B cell (primary cell): ENCODE measurements at regions of chr1 and their contacts with region 1.

Region 1: DNA sequence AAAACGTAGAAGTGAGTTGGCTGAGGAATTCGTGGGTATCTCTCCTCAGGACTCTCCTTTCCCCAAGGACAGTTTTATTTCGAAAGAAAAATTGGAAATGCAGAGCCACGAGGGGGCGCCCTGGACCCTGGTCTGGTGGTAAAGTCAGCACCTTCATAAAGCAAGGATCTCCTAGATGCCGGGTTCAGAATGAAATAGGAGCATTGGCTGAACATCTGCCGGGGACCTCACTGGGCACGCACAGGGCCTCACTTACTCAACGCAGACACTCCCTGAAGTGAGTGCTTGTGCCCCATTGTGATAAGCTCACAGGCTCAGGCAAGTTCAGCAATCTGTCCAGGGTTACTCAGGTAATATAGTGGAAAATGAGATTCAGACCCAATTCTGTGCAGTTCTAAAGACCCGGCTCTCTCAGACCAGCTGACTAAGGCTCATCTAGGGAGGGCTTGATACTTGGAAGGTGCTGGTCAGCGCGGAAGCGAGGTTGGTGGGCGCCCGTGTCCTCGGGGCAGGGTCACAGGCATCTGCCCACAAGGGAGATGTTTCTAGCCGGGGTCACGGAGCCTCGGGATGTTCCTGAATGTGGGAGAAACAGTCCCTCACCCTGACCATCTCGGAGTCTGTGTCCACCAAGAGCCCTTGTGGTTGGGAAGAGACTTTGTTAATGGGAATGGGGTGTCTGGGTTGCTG is 55.7 kb upstream of the ETV3 start:
- DNase-seq: peak; percentile 76
- ATAC-seq: no peak
- H3K4me3 ChIP-seq: no peak overlapping the region
- H3K4me3 Mint-ChIP-seq: no peak overlapping the region
- H3K27ac ChIP-seq: no peak overlapping the region
- H3K27ac Mint-ChIP-seq: no peak overlapping the region
- H3K4me1 ChIP-seq: peaks cover 3 to 4% of the 10 kb centered on the region in 2 donors
- H3K4me1 Mint-ChIP-seq: peaks cover 2% of the 10 kb centered on the region
- H3K27me3 ChIP-seq: peaks cover 0 to 34% (median 10%) of the 10 kb centered on the region in 4 experiments
- H3K27me3 Mint-ChIP-seq: peaks cover 42% of the 10 kb centered on the region
- CTCF ChIP-seq: peak; percentile 76

Region 2: GRCh38 chr1:157163273-157164127 is 30.3 kb before region 1 on chr1:
- CTCF ChIA-PET with region 1: no interaction called
- POLR2A ChIA-PET with region 1: no interaction called
- intact Hi-C with region 1: no loop called
- DNase-seq: peak; percentile 78
- ATAC-seq: peak; percentile 73
- H3K4me3 ChIP-seq: no peak overlapping the region
- H3K4me3 Mint-ChIP-seq: no peak overlapping the region
- H3K27ac ChIP-seq: no peak overlapping the region
- H3K27ac Mint-ChIP-seq: no peak overlapping the region
- H3K4me1 ChIP-seq: peaks cover 0 to 4% of the 10 kb centered on the region in 2 donors
- H3K4me1 Mint-ChIP-seq: peaks cover 5% of the 10 kb centered on the region
- H3K27me3 ChIP-seq: peaks cover 0 to 9% (median 2%) of the 10 kb centered on the region in 4 experiments
- H3K27me3 Mint-ChIP-seq: peaks cover 32% of the 10 kb centered on the region
- CTCF ChIP-seq: peak; percentile 91

Region 3: DNA sequence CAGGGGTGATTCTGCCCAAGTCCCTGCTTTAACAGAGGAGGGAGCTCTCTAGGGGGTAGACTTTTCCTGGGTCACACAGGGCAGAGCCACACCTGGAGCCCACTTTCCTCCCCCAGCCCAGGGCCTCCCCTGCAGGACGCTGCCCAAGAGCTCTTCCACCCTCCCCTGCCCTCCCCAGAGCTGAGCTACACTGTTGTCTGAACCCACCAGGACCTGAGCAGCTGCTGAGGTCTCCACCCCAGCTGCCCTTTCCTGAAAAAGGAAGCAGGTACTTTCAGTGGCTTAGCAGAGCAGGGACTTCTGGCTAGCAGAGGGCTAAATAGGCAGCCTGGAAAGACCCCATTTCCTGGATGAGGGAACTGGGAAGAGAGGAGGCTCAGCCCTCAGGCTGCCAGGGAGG is 113.6 kb after region 1 on chr1:
- CTCF ChIA-PET with region 1: no interaction called
- POLR2A ChIA-PET with region 1: no interaction called
- intact Hi-C with region 1: no loop called
- DNase-seq: no peak
- ATAC-seq: no peak
- H3K4me3 ChIP-seq: no peak overlapping the region
- H3K4me3 Mint-ChIP-seq: no peak overlapping the region
- H3K27ac ChIP-seq: no peak overlapping the region
- H3K27ac Mint-ChIP-seq: no peak overlapping the region
- H3K4me1 ChIP-seq: peaks cover 0 to 12% of the 10 kb centered on the region in 2 donors
- H3K4me1 Mint-ChIP-seq: no peaks in the 10 kb centered on the region
- H3K27me3 ChIP-seq: peaks cover 0 to 18% (median 6%) of the 10 kb centered on the region in 4 experiments
- H3K27me3 Mint-ChIP-seq: peaks cover 25% of the 10 kb centered on the region
- CTCF ChIP-seq: no peak

Region 4: GRCh38 chr1:157490467-157491165 is 296.8 kb after region 1 on chr1:
- CTCF ChIA-PET with region 1: interaction called, 12 read pairs
- POLR2A ChIA-PET with region 1: no interaction called
- intact Hi-C with region 1: loop called (anchors 1 kb)
- DNase-seq: peak; percentile 73
- ATAC-seq: peak; percentile 47
- H3K4me3 ChIP-seq: no peak overlapping the region
- H3K4me3 Mint-ChIP-seq: no peak overlapping the region
- H3K27ac ChIP-seq: no peak overlapping the region
- H3K27ac Mint-ChIP-seq: no peak overlapping the region
- H3K4me1 ChIP-seq: peaks cover 0 to 5% of the 10 kb centered on the region in 2 donors
- H3K4me1 Mint-ChIP-seq: peaks cover 2% of the 10 kb centered on the region
- H3K27me3 ChIP-seq: peaks cover 0 to 2% (median 0%) of the 10 kb centered on the region in 4 experiments
- H3K27me3 Mint-ChIP-seq: no peaks in the 10 kb centered on the region
- CTCF ChIP-seq: peak; percentile 75

Region 5: DNA sequence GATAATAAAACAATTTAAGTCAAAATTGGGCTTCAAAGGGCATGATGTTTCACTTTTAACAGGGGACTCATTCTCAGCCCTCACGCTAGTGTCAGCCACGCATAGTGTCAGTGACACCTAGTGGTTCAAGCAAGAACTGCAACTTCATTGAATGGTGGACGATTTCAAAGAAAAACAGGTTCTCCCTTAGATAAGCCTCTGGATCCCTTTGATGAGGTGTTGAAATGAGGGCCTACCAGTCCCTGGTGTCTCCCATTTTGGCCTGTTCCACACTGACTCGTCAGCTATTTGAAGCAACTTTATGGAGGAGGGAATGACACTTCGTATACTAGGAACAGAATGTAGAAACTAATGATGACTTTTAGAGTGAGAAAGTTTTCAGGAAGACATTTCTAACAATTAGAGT is 302.3 kb after region 1 on chr1:
- CTCF ChIA-PET with region 1: interaction called, 12 read pairs
- POLR2A ChIA-PET with region 1: no interaction called
- intact Hi-C with region 1: no loop called
- DNase-seq: peak; percentile 75
- ATAC-seq: peak; percentile 78
- H3K4me3 ChIP-seq: no peak overlapping the region
- H3K4me3 Mint-ChIP-seq: peak overlapping the region; percentile 30
- H3K27ac ChIP-seq: no peak overlapping the region
- H3K27ac Mint-ChIP-seq: no peak overlapping the region
- H3K4me1 ChIP-seq: peaks cover 22 to 36% of the 10 kb centered on the region in 2 donors
- H3K4me1 Mint-ChIP-seq: peaks cover 31% of the 10 kb centered on the region
- H3K27me3 ChIP-seq: peaks cover 0 to 2% (median 0%) of the 10 kb centered on the region in 4 experiments
- H3K27me3 Mint-ChIP-seq: no peaks in the 10 kb centered on the region
- CTCF ChIP-seq: peak; percentile 95

Region 6: DNA sequence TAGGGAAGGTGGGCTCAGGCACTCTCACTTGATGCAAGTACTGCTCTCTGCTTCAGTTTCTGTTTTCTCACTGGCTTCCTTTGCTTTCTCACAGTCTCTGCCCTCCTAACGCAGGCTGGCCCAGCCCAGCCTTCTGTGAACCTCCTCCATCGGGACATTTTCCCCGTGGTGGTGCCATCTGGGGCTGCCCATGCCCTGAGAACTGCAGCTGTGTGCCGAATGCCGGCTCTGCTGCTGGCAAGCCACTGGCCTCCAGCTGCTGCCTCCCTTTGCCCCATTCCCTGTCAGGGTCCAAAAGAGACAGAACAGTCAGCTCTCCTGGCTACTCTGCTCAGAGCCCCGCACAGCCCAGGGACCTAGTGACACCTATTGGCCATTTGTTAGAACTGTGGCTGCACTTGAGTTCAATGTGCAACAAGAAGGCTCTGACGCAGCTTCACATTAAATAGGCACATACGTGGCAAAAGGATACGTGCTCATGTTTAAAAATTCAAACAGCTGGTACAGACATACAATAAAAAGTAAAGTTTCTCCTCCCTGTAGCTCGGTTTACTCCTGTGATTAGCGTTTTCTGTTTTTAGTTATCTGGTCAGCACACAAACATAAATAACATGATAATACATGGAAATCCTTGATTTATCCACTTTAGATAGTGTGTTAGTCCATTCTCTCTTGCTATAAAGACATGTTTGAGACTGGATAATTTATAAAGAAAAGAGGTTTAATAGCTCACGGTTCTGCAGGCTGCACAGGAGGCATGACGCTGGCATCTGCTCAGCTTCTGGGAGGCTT is 311.8 kb after region 1 on chr1:
- CTCF ChIA-PET with region 1: interaction called, 12 read pairs
- POLR2A ChIA-PET with region 1: no interaction called
- intact Hi-C with region 1: loop called (anchors 5 kb)
- DNase-seq: peak; percentile 77
- ATAC-seq: peak; percentile 96
- H3K4me3 ChIP-seq: peak overlapping the region in 1 of 5 experiments; percentile 18
- H3K4me3 Mint-ChIP-seq: peak overlapping the region; percentile 73
- H3K27ac ChIP-seq: no peak overlapping the region
- H3K27ac Mint-ChIP-seq: peak overlapping the region; percentile 32
- H3K4me1 ChIP-seq: peaks cover 20 to 30% of the 10 kb centered on the region in 2 donors
- H3K4me1 Mint-ChIP-seq: peaks cover 39% of the 10 kb centered on the region
- H3K27me3 ChIP-seq: no peaks in the 10 kb centered on the region
- H3K27me3 Mint-ChIP-seq: no peaks in the 10 kb centered on the region
- CTCF ChIP-seq: peak; percentile 86